Mammary epithelial cell (primary cell): ENCODE measurements at regions of chr22 and their contacts with region 1.

Region 1: GRCh38 chr22:35357883-35358621 is 22.8 kb upstream of the HMOX1 start:
- DNase-seq: peak; percentile 96
- H3K4me3 ChIP-seq: no peak overlapping the region
- H3K27ac ChIP-seq: peak overlapping the region; percentile 51
- H3K4me1 ChIP-seq: peaks cover 6% of the 10 kb centered on the region
- H3K27me3 ChIP-seq: no peaks in the 10 kb centered on the region
- CTCF ChIP-seq: no peak

Region 2: GRCh38 chr22:35299673-35300497 is 58.2 kb before region 1 on chr22 and contains the start of gene TOM1:
- CTCF ChIA-PET with region 1: no interaction called
- dilution Hi-C with region 1: no loop called
- in situ Hi-C with region 1: no loop called
- intact Hi-C with region 1: no loop called
- DNase-seq: peak; percentile 98
- H3K4me3 ChIP-seq: peak within 1 kb of the TSS; percentile 76 to 95 (median 82)
- H3K27ac ChIP-seq: peak within 1 kb of the TSS; percentile 72
- H3K4me1 ChIP-seq: peaks cover 24% of the 10 kb centered on the region
- H3K27me3 ChIP-seq: no peaks in the 10 kb centered on the region
- CTCF ChIP-seq: no peak
- total RNA-seq, gene TOM1: 19.7 to 30.0 TPM

Region 3: DNA sequence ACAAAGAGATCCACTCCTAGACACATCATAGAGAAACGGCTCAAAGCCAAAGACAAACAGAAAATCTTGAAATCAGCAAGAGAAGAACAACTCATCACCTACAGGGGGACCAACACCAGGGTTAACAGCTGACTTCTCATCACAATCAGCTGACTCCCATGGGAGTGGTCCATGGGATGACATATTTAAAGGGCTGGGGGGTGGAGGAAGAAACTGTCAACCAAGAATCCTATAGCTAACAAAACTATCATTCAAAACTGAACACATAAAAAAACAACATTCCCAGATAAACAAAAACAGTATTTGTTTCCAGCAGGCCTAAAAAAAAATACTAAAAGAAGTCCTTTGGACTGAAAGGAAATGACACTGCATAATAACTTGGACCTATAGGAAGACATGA is 446.4 kb after region 1 on chr22:
- CTCF ChIA-PET with region 1: interaction called, 15 read pairs
- dilution Hi-C with region 1: no loop called
- in situ Hi-C with region 1: no loop called
- intact Hi-C with region 1: no loop called
- DNase-seq: no peak
- H3K4me3 ChIP-seq: no peak overlapping the region
- H3K27ac ChIP-seq: no peak overlapping the region
- H3K4me1 ChIP-seq: peaks cover 3% of the 10 kb centered on the region
- H3K27me3 ChIP-seq: no peaks in the 10 kb centered on the region
- CTCF ChIP-seq: no peak

Region 4: DNA sequence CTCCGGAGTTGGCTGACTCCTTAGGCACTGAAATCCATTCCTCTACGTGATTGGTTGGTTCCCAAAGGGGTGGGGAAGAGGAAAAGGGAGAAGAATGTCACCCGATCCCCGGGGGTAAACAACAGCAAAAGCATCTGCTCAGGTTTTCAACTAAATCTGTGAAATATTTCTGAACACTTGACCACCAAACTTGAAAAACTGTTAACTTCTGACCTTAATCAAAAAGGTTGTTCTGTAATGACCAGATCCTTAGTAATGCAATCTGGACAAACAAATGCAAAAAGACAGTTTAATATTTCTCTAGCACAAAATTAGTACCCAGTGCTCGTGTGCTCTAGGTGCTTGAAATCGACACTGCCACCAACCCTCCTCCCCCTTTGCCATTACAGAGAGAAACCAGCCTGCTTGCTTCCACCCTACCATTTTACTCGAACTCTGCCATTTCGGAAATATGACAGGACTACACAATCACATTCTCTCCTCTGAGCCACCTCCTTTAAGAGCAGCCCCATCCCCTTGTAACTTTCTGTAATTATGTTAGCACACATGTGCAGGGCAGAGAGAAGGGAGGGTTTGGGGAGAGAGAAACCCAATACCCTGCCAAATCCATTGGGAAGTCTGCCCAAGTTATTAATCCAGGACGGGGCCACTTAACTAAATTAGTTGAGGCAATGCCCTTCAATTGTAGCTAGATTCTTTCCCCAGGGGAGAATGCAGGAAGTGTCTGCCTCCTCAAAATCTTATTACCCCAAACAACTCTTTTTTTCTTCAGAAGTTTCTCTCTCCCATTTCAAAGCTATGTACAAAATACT is 556.8 kb after region 1 on chr22:
- CTCF ChIA-PET with region 1: interaction called, 10 read pairs
- dilution Hi-C with region 1: no loop called
- in situ Hi-C with region 1: no loop called
- intact Hi-C with region 1: no loop called
- DNase-seq: peak; percentile 91
- H3K4me3 ChIP-seq: peak overlapping the region; percentile 38 to 49 (median 41)
- H3K27ac ChIP-seq: peak overlapping the region; percentile 74
- H3K4me1 ChIP-seq: peaks cover 52% of the 10 kb centered on the region
- H3K27me3 ChIP-seq: no peaks in the 10 kb centered on the region
- CTCF ChIP-seq: no peak